ENCODE measurements at regions of chr14 and their contacts with region 1.

Region 1: GRCh38 chr14:79543971-79544697 is 667.2 kb downstream of the DIO2 start:
- DNase-seq: peak; percentile 38 to 59
- H3K4me3 ChIP-seq: no peak overlapping the region
- H3K27ac ChIP-seq: no peak overlapping the region; the same call in 1 of the 2 replicates
- H3K4me1 ChIP-seq: peaks cover 0 to 3% (median 0%) of the 10 kb centered on the region in 4 experiments; a peak in 2 of 7 replicates
- H3K27me3 ChIP-seq: peaks cover 0 to 1% (median 0%) of the 10 kb centered on the region in 4 experiments; a peak in 1 of 7 replicates
- CTCF ChIP-seq: peak; percentile 45 to 70 (median 61)
- EP300 ChIP-seq: no peak
- POLR2A ChIP-seq: no peak
- RAD21 ChIP-seq: peak; percentile 78 to 81

Region 2: DNA sequence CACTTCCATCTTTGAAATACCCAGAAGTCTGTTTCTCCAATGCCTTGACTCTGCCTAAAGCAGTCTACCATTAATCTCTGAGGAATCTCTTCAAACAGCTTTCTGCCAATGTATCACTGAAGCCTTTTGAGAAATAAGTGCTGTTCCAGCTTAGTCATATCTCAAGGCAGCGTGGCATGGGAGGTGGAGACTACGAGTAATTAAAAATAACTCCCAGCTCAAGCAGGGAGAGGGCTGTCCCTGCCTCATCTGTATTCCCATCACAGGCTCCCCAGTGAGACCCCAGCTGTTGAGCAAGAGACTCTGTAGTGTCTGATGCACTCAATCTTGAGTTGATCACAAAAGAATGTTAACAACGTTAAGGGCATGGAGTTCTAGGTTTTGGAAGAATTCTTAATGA is 33.5 kb before region 1 on chr14:
- CTCF ChIA-PET with region 1: interaction called, 11 read pairs
- POLR2A ChIA-PET with region 1: no interaction called
- DNase-seq: no peak
- H3K4me3 ChIP-seq: no peak overlapping the region
- H3K27ac ChIP-seq: no peak overlapping the region
- H3K4me1 ChIP-seq: peaks cover 0 to under 1% (median 0%) of the 10 kb centered on the region in 4 experiments; a peak in 3 of 7 replicates
- H3K27me3 ChIP-seq: no peaks in the 10 kb centered on the region
- CTCF ChIP-seq: no peak
- EP300 ChIP-seq: no peak
- POLR2A ChIP-seq: no peak
- RAD21 ChIP-seq: no peak

Region 3: DNA sequence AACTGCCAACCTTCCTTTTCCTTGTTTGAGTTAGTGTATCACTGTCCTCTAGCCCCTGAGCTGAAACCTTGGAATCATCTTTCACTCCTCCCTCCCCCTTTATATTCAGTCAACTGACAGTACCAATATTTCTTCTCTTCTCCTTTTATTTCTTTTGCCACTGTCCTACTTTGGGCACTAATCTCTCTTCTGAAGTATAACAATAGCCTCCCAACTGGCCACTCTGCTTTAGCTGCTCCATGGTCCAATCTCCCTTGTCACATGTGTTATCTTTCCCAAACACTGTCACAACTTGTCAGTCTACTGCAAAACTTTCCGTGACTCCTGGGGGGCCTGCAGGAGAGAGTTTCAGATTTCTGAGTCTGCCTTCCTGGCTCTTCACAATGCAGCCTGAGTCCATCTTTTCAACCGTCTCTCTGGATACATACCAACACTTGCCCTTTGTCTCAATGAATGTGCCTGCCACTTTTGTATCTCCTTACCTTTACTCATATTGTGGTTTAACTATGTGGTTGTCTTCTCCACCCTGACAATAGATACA is 196.0 kb after region 1 on chr14:
- CTCF ChIA-PET with region 1: no interaction called
- POLR2A ChIA-PET with region 1: no interaction called
- DNase-seq: no peak
- H3K4me3 ChIP-seq: no peak overlapping the region
- H3K27ac ChIP-seq: no peak overlapping the region
- H3K4me1 ChIP-seq: no peaks in the 10 kb centered on the region
- H3K27me3 ChIP-seq: no peaks in the 10 kb centered on the region
- CTCF ChIP-seq: no peak
- EP300 ChIP-seq: no peak
- POLR2A ChIP-seq: no peak
- RAD21 ChIP-seq: no peak

Measured in H1 (cell line).